Psoas muscle (tissue), 8 donors: ENCODE measurements at regions of chr3 and their contacts with region 1.

Region 1: DNA sequence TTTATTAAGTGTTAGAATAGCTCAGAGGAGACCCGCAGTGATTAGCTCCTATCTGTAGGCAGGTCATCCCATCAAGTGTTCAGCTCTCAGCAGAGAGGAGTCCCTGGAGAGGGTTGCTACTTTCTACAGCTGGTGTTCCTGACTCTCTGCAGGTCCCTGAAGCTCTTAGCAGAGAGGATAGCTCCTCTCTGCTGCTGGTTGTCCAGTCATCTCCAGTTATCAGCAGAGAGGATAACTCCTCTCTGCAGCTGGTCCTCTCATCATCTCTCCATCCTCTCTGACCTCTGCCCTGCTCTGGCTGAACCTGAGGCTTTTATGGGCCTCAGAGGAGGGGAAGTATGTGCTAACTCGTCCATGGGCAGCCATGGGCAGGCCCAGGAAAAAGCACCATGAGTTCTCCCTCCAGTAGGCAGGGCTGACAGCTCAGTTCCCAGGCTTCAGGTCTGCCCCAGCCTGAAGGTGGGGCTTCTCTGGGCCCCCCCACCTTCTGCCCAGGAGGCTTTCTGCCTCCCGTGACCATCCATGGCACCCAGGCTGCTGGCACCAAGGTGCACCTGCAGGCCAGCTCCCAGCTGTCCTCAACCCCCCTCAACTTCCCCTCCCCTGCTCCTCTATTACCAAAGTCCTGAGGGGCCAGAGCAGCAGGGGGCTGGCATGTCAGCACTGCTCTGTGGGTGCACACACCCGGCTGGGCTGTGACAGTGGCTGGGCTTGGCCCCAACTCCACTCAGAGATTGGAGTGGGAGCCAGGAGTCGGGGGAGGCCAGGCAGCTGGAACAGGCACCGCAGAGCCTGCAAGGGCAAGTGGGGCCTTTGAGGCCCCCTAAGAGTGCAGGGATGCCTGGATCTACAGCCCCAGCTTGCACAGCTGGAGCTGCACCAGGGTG is 98.9 kb upstream of the FRMD4B start:
- DNase-seq: no peak
- ATAC-seq: no peak
- H3K4me3 ChIP-seq: no peak overlapping the region
- H3K27ac ChIP-seq: no peak overlapping the region
- H3K4me1 ChIP-seq: no peaks in the 10 kb centered on the region
- H3K27me3 ChIP-seq: no peaks in the 10 kb centered on the region
- CTCF ChIP-seq: no peak

Region 2: DNA sequence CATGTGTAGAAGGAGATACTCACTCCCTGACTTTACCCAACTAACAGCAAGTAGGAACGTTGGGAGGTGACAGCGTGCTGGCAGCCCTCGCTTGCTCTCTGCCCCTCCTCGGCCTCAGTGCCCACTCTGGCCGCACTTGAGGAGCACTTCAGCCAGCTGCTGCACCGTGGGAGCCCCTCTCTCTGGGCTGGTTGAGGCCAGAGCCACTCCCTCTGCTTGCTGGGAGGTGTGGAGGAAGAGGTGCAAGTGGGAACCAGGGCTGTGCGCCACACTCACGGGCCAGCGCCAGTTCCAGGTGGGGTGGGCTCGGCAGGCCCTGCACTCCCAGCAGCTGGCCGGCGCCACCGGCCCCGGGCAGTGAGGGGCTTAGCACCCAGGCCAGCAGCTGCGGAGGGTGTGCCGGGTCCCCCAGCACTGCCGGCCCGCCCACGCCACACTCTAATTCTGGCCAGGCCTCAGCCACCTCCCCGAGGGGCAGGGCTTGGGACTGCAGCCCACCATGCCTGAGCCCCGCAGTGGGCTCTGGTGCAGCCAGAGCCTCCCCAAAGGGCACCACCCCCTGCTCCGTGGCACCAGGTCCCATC is 30.5 kb before region 1 on chr3:
- intact Hi-C with region 1: loop called in 1 of 2 experiments (anchors 2 kb)
- DNase-seq: no peak
- ATAC-seq: no peak
- H3K4me3 ChIP-seq: no peak overlapping the region
- H3K27ac ChIP-seq: no peak overlapping the region
- H3K4me1 ChIP-seq: no peaks in the 10 kb centered on the region
- H3K27me3 ChIP-seq: no peaks in the 10 kb centered on the region
- CTCF ChIP-seq: no peak